GM18951 (cell line): ENCODE measurements at regions of chr14 and their contacts with region 1.

Region 1: DNA sequence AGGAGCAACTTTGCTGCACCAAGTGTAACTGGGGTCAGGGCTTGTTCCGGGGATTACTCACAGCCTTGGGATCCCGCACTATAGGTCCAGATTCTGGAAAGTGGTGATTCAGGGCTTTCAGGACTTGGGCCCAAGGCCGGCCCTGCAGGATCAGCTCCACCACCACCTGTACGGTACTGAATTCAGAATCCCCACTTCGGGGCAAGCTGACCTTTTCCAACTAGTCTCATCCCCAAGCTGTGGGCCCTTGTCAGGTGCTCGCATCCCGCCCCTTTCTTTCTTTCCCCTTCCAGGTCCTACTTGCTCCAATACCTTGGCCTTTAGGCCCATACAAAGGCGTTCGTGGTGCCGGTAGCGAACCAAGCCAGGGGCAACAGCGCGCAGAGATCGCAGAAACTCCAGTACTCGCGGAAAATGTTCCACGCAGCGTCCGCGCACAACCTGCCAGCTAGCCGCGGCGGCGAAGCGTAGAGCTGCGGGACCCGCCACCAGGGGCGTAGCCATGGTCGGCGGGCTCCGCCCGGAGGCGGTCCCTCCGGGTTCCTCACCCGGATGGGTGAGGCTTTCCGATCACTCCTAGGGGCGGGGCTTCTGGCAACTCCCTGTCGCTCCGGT is 487 bp downstream of the TINF2 start:
- POLR2A ChIP-seq: no peak

Region 2: GRCh38 chr14:24299255-24300195 is 57.6 kb after region 1 on chr14 and contains the starts of genes DHRS1 and NOP9:
- in situ Hi-C with region 1: loop called (anchors 5 kb)
- POLR2A ChIP-seq: peak; percentile 82

Region 3: DNA sequence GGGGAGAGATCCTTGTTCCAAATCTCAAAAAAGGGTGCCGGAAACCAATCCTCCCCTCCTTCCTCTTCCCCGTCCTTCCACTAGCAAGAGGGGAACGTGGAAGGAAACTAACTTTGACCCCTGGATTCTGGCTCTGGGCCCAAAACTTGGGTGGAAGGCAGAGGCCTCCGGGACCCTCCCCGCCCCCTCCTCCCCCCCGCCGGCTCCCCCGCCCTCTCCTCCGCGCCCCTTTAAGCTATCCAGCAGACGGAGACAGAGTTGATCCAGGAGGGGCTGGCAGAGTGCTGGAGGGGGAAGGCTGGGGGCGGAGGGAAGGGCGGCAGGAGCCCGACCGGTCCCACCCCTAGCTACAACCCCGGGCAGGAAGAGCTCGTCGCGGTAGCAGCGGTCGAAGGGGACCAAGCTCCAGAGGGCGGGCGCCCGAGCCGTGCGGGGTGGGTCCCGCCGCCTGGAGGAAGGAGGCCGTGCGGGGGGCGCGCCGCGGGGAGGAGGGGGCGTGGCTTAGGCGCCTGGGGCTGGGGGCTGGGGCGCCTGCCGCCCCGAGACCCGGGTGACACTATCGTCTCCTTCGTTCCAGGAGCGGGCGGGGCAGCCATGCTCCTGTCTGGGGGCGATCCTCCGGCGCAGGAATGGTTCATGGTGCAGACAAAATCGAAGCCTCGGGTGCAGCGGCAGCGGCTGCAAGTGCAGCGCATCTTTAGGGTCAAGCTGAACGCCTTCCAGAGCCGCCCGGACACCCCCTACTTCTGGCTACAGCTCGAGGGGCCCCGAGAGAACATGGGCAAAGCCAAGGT is 156.9 kb after region 1 on chr14 and contains the start of gene NYNRIN:
- in situ Hi-C with region 1: no loop called
- POLR2A ChIP-seq: no peak